Natural killer cell (primary cell): ENCODE measurements at regions of chr7 and their contacts with region 1.

Region 1: GRCh38 chr7:1940402-1940786 is 270.3 kb downstream of the ELFN1 start:
- DNase-seq: peak; percentile 88 to 96
- ATAC-seq: peak; percentile 79 to 92 (median 89)
- H3K4me3 ChIP-seq: peak overlapping the region; percentile 64
- H3K4me3 Mint-ChIP-seq: peak overlapping the region; percentile 92
- H3K27ac ChIP-seq: peak overlapping the region; percentile 85
- H3K27ac Mint-ChIP-seq: peak overlapping the region; percentile 89 to 94
- H3K4me1 ChIP-seq: peaks cover 80% of the 10 kb centered on the region
- H3K4me1 Mint-ChIP-seq: peaks cover 63 to 72% of the 10 kb centered on the region in 2 donors
- H3K27me3 ChIP-seq: peaks cover 5% of the 10 kb centered on the region
- H3K27me3 Mint-ChIP-seq: peaks cover 0 to 7% of the 10 kb centered on the region in 2 donors
- CTCF ChIP-seq: no peak

Region 2: DNA sequence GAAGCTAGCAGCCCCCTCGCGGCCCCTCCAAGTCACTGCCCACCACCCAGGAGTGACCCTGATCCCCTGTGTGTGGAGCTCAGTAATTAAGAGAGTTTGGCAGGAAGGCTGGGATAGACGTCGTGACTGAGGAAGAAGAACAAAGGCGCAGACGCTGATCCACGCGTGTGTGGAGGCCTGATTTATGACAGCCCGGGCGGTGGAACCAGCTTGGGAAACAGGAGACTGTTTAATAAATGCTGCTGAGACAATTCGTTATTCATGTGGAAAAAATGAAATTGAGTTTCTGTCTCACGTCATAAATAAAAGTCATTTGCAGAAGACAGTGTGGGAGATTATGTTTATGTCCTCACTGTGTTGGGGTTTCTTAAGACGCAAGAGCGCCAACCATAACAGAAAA is 139.5 kb before region 1 on chr7:
- intact Hi-C with region 1: no loop called
- DNase-seq: no peak
- ATAC-seq: no peak
- H3K4me3 ChIP-seq: no peak overlapping the region
- H3K4me3 Mint-ChIP-seq: no peak overlapping the region
- H3K27ac ChIP-seq: no peak overlapping the region
- H3K27ac Mint-ChIP-seq: no peak overlapping the region
- H3K4me1 ChIP-seq: no peaks in the 10 kb centered on the region
- H3K4me1 Mint-ChIP-seq: no peaks in the 10 kb centered on the region
- H3K27me3 ChIP-seq: no peaks in the 10 kb centered on the region
- H3K27me3 Mint-ChIP-seq: peaks cover 20 to 30% of the 10 kb centered on the region in 2 donors
- CTCF ChIP-seq: no peak

Region 3: GRCh38 chr7:1961701-1962276 is 21.4 kb after region 1 on chr7:
- intact Hi-C with region 1: loop called (anchors 1 kb)
- DNase-seq: peak; percentile 67 to 81
- ATAC-seq: peak; percentile 66 to 87 (median 78)
- H3K4me3 ChIP-seq: no peak overlapping the region
- H3K4me3 Mint-ChIP-seq: peak overlapping the region; percentile 41
- H3K27ac ChIP-seq: peak overlapping the region; percentile 8
- H3K27ac Mint-ChIP-seq: peak overlapping the region; percentile 93 to 96
- H3K4me1 ChIP-seq: no peaks in the 10 kb centered on the region
- H3K4me1 Mint-ChIP-seq: peaks cover 34 to 36% of the 10 kb centered on the region in 2 donors
- H3K27me3 ChIP-seq: no peaks in the 10 kb centered on the region
- H3K27me3 Mint-ChIP-seq: peaks cover 24 to 26% of the 10 kb centered on the region in 2 donors
- CTCF ChIP-seq: no peak

Region 4: GRCh38 chr7:2032030-2032875 is 91.9 kb after region 1 on chr7:
- intact Hi-C with region 1: no loop called
- DNase-seq: no peak
- ATAC-seq: no peak
- H3K4me3 ChIP-seq: no peak overlapping the region
- H3K4me3 Mint-ChIP-seq: peak overlapping the region; percentile 90
- H3K27ac ChIP-seq: no peak overlapping the region
- H3K27ac Mint-ChIP-seq: peak overlapping the region in 1 of 2 donors; percentile 85
- H3K4me1 ChIP-seq: peaks cover 30% of the 10 kb centered on the region
- H3K4me1 Mint-ChIP-seq: peaks cover 45 to 54% of the 10 kb centered on the region in 2 donors
- H3K27me3 ChIP-seq: no peaks in the 10 kb centered on the region
- H3K27me3 Mint-ChIP-seq: peaks cover 21 to 46% of the 10 kb centered on the region in 2 donors
- CTCF ChIP-seq: no peak

Region 5: DNA sequence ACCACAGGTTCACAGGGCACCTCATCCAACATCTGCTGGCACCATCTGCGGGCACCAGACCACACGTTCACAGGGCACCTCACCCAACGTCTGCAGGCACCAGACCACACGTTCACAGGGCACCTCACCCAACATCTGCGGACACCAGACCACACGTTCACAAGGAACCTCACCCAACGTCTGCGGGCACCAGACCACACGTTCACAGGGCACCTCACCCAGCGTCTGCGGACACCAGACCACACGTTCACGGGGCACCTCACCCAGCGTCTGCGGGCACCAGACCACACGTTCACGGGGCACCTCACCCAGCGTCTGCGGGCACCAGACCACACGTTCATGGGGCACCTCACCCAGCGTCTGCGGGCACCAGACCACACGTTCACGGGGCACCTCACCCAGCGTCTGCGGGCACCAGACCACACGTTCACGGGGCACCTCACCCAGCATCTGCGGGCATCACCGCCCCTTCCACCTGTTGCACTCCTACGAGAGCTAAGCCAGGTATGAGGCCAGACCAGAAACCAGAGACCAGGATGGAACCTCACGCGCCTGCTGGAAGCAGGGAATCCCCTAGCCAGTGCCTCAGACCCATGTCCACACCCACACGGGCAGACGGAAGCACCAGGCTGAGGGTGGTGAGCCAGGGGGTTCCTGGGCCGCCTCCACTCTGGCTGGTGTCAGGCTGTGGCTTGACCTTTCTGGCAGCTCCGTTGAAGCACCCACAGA is 109.6 kb after region 1 on chr7:
- intact Hi-C with region 1: loop called (anchors 2 kb)
- DNase-seq: peak; percentile 51 to 53
- ATAC-seq: peak; percentile 74 to 93 (median 81)
- H3K4me3 ChIP-seq: no peak overlapping the region
- H3K4me3 Mint-ChIP-seq: peak overlapping the region; percentile 64
- H3K27ac ChIP-seq: peak overlapping the region; percentile 36
- H3K27ac Mint-ChIP-seq: peak overlapping the region; percentile 68 to 90
- H3K4me1 ChIP-seq: peaks cover 44% of the 10 kb centered on the region
- H3K4me1 Mint-ChIP-seq: peaks cover 50 to 53% of the 10 kb centered on the region in 2 donors
- H3K27me3 ChIP-seq: no peaks in the 10 kb centered on the region
- H3K27me3 Mint-ChIP-seq: peaks cover 10 to 13% of the 10 kb centered on the region in 2 donors
- CTCF ChIP-seq: no peak

Region 6: GRCh38 chr7:2104107-2104710 is 163.8 kb after region 1 on chr7:
- intact Hi-C with region 1: loop called (anchors 1 kb)
- DNase-seq: peak; percentile 42 to 84
- ATAC-seq: peak; percentile 58 to 63 (median 61)
- H3K4me3 ChIP-seq: no peak overlapping the region
- H3K4me3 Mint-ChIP-seq: no peak overlapping the region
- H3K27ac ChIP-seq: no peak overlapping the region
- H3K27ac Mint-ChIP-seq: peak overlapping the region in 1 of 2 donors; percentile 21
- H3K4me1 ChIP-seq: peaks cover 57% of the 10 kb centered on the region
- H3K4me1 Mint-ChIP-seq: peaks cover 55 to 56% of the 10 kb centered on the region in 2 donors
- H3K27me3 ChIP-seq: no peaks in the 10 kb centered on the region
- H3K27me3 Mint-ChIP-seq: peaks cover 0 to 5% of the 10 kb centered on the region in 2 donors
- CTCF ChIP-seq: peak; percentile 46

Region 7: DNA sequence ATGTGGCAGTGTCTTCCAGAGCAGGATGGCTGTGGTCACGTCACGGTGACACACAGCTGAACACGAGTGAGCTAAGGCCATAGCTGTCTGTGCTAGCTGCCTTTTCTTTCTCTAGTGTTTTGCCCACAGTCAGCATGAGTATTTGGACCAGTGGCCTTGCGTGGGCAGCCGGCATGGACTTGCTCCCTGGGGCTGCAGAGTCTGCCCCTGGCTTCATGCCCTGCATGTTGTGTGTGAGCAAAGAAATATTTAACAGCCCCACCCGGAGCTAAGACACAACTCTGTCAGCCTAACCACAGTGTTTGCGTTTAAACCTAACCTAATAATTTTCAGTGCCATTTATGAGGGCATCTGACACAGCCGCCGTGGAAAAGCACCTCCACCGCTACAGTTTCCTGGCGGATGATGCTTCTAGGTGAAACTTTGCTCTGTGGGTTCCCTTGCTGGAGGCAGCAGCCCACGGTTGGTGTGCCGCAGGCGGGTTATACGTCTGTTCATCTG is 477.6 kb after region 1 on chr7:
- intact Hi-C with region 1: loop called (anchors 5 kb)
- DNase-seq: peak; percentile 80 to 86
- ATAC-seq: peak; percentile 69 to 89 (median 85)
- H3K4me3 ChIP-seq: no peak overlapping the region
- H3K4me3 Mint-ChIP-seq: peak overlapping the region; percentile 86
- H3K27ac ChIP-seq: peak overlapping the region; percentile 80
- H3K27ac Mint-ChIP-seq: peak overlapping the region; percentile 63 to 93
- H3K4me1 ChIP-seq: peaks cover 91% of the 10 kb centered on the region
- H3K4me1 Mint-ChIP-seq: peaks cover 60 to 63% of the 10 kb centered on the region in 2 donors
- H3K27me3 ChIP-seq: no peaks in the 10 kb centered on the region
- H3K27me3 Mint-ChIP-seq: no peaks in the 10 kb centered on the region
- CTCF ChIP-seq: no peak